B cell (primary cell): ENCODE measurements at regions of chr19 and their contacts with region 1.

Region 1: DNA sequence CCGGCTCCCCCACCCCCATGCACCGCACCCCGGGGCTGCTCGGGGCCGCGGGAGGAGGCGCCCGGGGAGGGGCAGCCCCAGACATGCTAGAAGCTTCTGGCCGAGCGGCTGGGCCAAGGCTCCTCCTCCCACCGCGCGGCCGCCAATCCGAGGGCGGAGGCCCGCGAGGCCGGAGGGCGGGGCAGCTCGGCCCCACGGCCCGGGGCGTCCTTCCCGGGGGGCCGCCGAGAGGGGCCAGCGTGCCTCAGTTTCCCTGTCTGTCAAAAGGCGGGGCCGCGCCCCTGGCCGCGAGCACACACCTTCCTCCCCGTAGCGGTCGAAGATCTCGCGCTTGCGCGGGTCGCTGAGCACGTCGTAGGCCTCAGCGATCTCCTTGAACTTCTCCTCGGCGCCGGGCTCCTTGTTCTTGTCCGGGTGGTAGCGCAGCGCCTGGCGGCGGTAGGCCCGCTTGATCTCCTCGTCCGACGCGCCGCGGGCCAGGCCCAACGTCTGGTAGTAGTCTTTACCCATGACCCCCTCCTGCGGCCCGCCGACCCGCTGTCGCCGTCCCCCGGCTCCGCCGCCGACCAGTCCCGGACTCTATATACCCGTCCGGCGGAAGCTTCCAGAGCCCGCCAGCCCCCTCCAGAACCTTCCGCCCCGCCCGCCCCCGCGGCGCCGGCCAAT is at the start of gene DNAJB1:
- DNase-seq: no peak
- ATAC-seq: peak; percentile 52
- H3K4me3 ChIP-seq: peak within 1 kb of the TSS; percentile 88 to 98 (median 94)
- H3K4me3 Mint-ChIP-seq: peak within 1 kb of the TSS; percentile 96
- H3K27ac ChIP-seq: peak within 1 kb of the TSS; percentile 93 to 95
- H3K27ac Mint-ChIP-seq: peak within 1 kb of the TSS; percentile 99
- H3K4me1 ChIP-seq: peaks cover 44 to 48% of the 10 kb centered on the region in 2 donors
- H3K4me1 Mint-ChIP-seq: peaks cover 55% of the 10 kb centered on the region
- H3K27me3 ChIP-seq: no peaks in the 10 kb centered on the region
- H3K27me3 Mint-ChIP-seq: no peaks in the 10 kb centered on the region
- CTCF ChIP-seq: no peak
- total RNA-seq, gene DNAJB1: 72.8 and 82.1 TPM in 2 replicates

Region 2: GRCh38 chr19:14432791-14433553 is 85.0 kb before region 1 on chr19 and contains the start of gene PKN1:
- CTCF ChIA-PET with region 1: no interaction called
- POLR2A ChIA-PET with region 1: no interaction called
- intact Hi-C with region 1: no loop called
- DNase-seq: peak; percentile 73
- ATAC-seq: peak; percentile 66
- H3K4me3 ChIP-seq: peak within 1 kb of the TSS; percentile 14 to 81 (median 77)
- H3K4me3 Mint-ChIP-seq: peak within 1 kb of the TSS; percentile 89
- H3K27ac ChIP-seq: peak within 1 kb of the TSS; percentile 76 to 86
- H3K27ac Mint-ChIP-seq: peak within 1 kb of the TSS; percentile 90
- H3K4me1 ChIP-seq: peaks cover 20 to 28% of the 10 kb centered on the region in 2 donors
- H3K4me1 Mint-ChIP-seq: peaks cover 31% of the 10 kb centered on the region
- H3K27me3 ChIP-seq: peaks cover 0 to 3% (median 0%) of the 10 kb centered on the region in 4 experiments
- H3K27me3 Mint-ChIP-seq: no peaks in the 10 kb centered on the region
- CTCF ChIP-seq: no peak
- total RNA-seq, gene PKN1: 170 and 171 TPM in 2 replicates

Region 3: GRCh38 chr19:14496028-14496833 is 21.7 kb before region 1 on chr19 and contains the start of gene GIPC1:
- CTCF ChIA-PET with region 1: no interaction called
- POLR2A ChIA-PET with region 1: interaction called, 6 read pairs
- intact Hi-C with region 1: loop called (anchors 1 kb)
- DNase-seq: peak; percentile 89
- ATAC-seq: peak; percentile 90
- H3K4me3 ChIP-seq: peak within 1 kb of the TSS in 4 of 5 experiments; percentile 62 to 69 (median 62)
- H3K4me3 Mint-ChIP-seq: peak within 1 kb of the TSS; percentile 86
- H3K27ac ChIP-seq: peak within 1 kb of the TSS in 1 of 2 donors; percentile 24
- H3K27ac Mint-ChIP-seq: peak within 1 kb of the TSS; percentile 78
- H3K4me1 ChIP-seq: peaks cover 6 to 16% of the 10 kb centered on the region in 2 donors
- H3K4me1 Mint-ChIP-seq: peaks cover 14% of the 10 kb centered on the region
- H3K27me3 ChIP-seq: no peaks in the 10 kb centered on the region
- H3K27me3 Mint-ChIP-seq: no peaks in the 10 kb centered on the region
- CTCF ChIP-seq: no peak
- total RNA-seq, gene GIPC1: 10.7 and 12.0 TPM in 2 replicates